H1 (cell line): ENCODE measurements at regions of chr1 and their contacts with region 1.

Region 1: DNA sequence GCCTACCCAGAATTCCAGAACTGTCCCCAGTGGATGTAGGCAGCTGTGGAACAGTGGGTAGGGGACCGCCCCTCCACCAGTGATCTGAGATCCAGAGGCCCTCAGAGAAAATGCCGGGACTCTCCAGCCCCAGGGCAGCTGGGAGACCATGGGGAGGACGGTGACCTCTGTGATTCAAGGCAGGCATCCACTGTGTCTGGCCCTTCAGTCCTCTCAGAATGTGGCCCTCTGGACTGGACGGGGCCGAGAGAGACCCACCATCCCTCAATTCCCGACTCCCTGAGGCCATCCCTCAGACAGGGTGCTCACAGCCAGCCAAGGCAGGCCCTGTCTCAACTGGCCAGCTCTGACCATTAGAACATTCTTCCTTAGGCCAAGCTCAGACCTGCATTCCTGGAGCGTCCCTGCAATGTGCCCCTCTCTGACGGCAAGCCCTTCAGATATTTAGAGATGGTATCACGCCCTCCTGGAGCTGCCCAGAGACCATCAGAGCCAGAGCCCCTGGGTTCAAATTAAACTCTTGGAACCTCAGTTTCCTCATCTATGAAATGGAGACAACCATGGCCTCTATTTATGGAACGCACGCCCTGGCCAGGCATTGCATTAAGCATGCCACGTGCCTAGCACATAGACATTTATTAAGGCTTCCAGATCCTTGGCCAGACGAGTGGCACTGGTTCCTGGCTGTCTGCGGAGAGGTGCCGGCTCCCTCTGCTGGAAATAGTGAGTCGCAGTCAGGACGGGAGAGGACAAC is 9.6 kb upstream of the EPS8L3 start:
- DNase-seq: peak; percentile 34 to 66
- H3K4me3 ChIP-seq: no peak overlapping the region
- H3K27ac ChIP-seq: no peak overlapping the region
- H3K4me1 ChIP-seq: peaks cover 0 to 4% (median 0%) of the 10 kb centered on the region in 4 experiments; a peak in 1 of 7 replicates
- H3K27me3 ChIP-seq: no peaks in the 10 kb centered on the region; a peak in 2 of 7 replicates
- CTCF ChIP-seq: peak; percentile 93 to 97 (median 95)
- EP300 ChIP-seq: no peak
- POLR2A ChIP-seq: no peak
- RAD21 ChIP-seq: peak; percentile 97

Region 2: DNA sequence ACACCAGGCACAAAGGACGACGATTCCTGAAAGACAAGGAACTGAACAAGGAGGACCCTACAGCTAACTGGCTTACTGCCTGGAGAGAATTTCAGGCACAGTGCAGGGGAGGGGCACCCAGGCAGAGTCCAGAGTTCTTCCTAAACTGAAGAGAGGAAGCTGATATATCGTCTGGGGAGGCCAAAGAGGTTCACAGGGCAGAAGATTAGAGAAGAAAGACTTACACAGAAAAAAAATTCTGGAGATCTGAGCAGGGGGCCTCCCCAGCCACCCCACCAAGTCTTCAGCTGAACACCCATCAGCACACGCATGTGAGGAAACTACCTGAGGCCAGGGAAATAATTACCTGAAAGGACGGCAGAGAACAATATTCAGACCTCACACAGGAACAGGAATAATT is 400.2 kb before region 1 on chr1:
- CTCF ChIA-PET with region 1: no interaction called
- POLR2A ChIA-PET with region 1: no interaction called
- DNase-seq: no peak
- H3K4me3 ChIP-seq: no peak overlapping the region
- H3K27ac ChIP-seq: no peak overlapping the region
- H3K4me1 ChIP-seq: peaks cover 0 to 10% (median 2%) of the 10 kb centered on the region in 4 experiments; a peak in 3 of 7 replicates
- H3K27me3 ChIP-seq: no peaks in the 10 kb centered on the region
- CTCF ChIP-seq: no peak
- EP300 ChIP-seq: no peak
- POLR2A ChIP-seq: no peak
- RAD21 ChIP-seq: no peak

Region 3: GRCh38 chr1:109589177-109589576 is 184.1 kb before region 1 on chr1:
- CTCF ChIA-PET with region 1: no interaction called
- POLR2A ChIA-PET with region 1: no interaction called
- DNase-seq: no peak
- H3K4me3 ChIP-seq: no peak overlapping the region
- H3K27ac ChIP-seq: no peak overlapping the region
- H3K4me1 ChIP-seq: no peaks in the 10 kb centered on the region
- H3K27me3 ChIP-seq: no peaks in the 10 kb centered on the region
- CTCF ChIP-seq: no peak
- EP300 ChIP-seq: no peak
- POLR2A ChIP-seq: no peak
- RAD21 ChIP-seq: no peak

Region 4: DNA sequence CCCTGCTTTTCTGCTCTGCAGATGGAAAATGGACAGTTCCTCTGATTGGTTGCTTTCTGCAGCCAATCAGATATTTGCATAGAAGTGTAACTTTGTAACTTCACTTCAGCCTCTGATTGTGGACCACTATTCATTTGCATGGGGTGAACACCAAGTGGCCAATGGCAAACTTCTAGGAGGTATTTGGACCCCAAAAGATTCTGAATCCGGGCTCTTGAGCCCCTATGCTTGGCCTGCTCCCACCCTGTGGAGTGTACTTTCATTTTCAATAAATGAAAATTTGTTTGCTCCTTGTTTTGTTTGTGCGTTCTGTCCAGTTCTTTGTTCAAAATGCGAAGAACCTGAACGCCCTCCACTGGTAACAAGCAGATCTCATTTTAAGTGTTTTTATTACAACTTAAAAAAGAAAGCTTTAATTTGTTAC is 123.8 kb before region 1 on chr1:
- CTCF ChIA-PET with region 1: interaction called, 293 read pairs
- POLR2A ChIA-PET with region 1: no interaction called
- DNase-seq: no peak
- H3K4me3 ChIP-seq: no peak overlapping the region
- H3K27ac ChIP-seq: no peak overlapping the region
- H3K4me1 ChIP-seq: no peaks in the 10 kb centered on the region
- H3K27me3 ChIP-seq: peaks cover 0 to 2% (median 2%) of the 10 kb centered on the region in 4 experiments; a peak in 6 of 7 replicates
- CTCF ChIP-seq: no peak
- EP300 ChIP-seq: no peak
- POLR2A ChIP-seq: no peak
- RAD21 ChIP-seq: no peak

Region 5: GRCh38 chr1:109751531-109752260 is 21.6 kb before region 1 on chr1:
- CTCF ChIA-PET with region 1: interaction called, 14 read pairs
- POLR2A ChIA-PET with region 1: no interaction called
- DNase-seq: no peak
- H3K4me3 ChIP-seq: no peak overlapping the region
- H3K27ac ChIP-seq: no peak overlapping the region
- H3K4me1 ChIP-seq: no peaks in the 10 kb centered on the region
- H3K27me3 ChIP-seq: no peaks in the 10 kb centered on the region
- CTCF ChIP-seq: no peak
- EP300 ChIP-seq: no peak
- POLR2A ChIP-seq: no peak
- RAD21 ChIP-seq: no peak

Region 6: GRCh38 chr1:109802901-109803561 is 29.7 kb after region 1 on chr1:
- CTCF ChIA-PET with region 1: interaction called, 10 read pairs
- POLR2A ChIA-PET with region 1: no interaction called
- DNase-seq: no peak
- H3K4me3 ChIP-seq: no peak overlapping the region
- H3K27ac ChIP-seq: no peak overlapping the region
- H3K4me1 ChIP-seq: no peaks in the 10 kb centered on the region
- H3K27me3 ChIP-seq: no peaks in the 10 kb centered on the region
- CTCF ChIP-seq: no peak
- EP300 ChIP-seq: no peak
- POLR2A ChIP-seq: no peak
- RAD21 ChIP-seq: no peak

Region 7: DNA sequence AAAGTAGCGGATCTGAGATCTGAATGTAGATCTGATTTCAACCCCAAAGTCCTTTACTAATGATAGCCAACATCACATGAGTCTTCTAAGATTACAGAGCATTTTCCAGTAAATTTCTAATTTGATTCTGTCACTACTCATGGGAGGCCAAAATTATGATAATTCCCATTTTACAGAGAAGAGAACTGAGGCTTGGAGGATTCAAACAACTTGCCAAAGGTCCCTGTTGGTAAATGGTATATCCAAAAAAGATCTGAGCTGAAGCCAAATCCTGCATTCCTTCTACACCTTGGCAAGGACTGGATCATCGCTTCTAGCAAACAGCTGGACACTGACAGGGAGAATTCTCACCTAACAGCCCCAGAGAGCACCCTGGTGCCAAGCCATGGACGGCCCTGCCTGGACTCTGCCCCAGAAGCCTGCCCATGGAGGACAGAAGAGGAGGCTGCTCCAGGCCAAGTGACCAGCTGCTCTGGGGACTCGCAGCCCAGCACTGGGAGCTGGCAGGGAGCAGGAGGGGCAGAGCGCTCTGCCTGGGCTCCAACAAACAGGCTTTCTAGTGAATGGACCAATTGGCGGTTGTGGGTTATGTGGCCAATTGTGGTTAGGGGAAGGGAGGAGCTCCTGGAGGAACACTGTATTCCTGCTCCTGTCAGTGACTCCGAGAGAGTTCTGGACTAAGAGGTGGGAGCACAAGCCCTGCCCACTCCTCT is 130.9 kb after region 1 on chr1:
- CTCF ChIA-PET with region 1: interaction called, 13 read pairs
- POLR2A ChIA-PET with region 1: no interaction called
- DNase-seq: no peak
- H3K4me3 ChIP-seq: no peak overlapping the region
- H3K27ac ChIP-seq: no peak overlapping the region
- H3K4me1 ChIP-seq: peaks cover 0 to 3% (median 1%) of the 10 kb centered on the region in 4 experiments; a peak in 2 of 7 replicates
- H3K27me3 ChIP-seq: peaks cover 0 to 18% (median 12%) of the 10 kb centered on the region in 4 experiments; a peak in 6 of 7 replicates
- CTCF ChIP-seq: no peak
- EP300 ChIP-seq: no peak
- POLR2A ChIP-seq: no peak
- RAD21 ChIP-seq: no peak

Region 8: GRCh38 chr1:109959974-109960744 is 186.8 kb after region 1 on chr1:
- CTCF ChIA-PET with region 1: interaction called, 10 read pairs
- POLR2A ChIA-PET with region 1: no interaction called
- DNase-seq: no peak
- H3K4me3 ChIP-seq: peak overlapping the region in 2 of 4 experiments; percentile 13 to 45; a peak in 4 of 8 replicates
- H3K27ac ChIP-seq: no peak overlapping the region; the same call in 1 of the 2 replicates
- H3K4me1 ChIP-seq: peaks cover 5 to 26% (median 17%) of the 10 kb centered on the region in 4 experiments; a peak in 6 of 7 replicates
- H3K27me3 ChIP-seq: peaks cover 0 to 9% (median 2%) of the 10 kb centered on the region in 4 experiments; a peak in 4 of 7 replicates
- CTCF ChIP-seq: no peak
- EP300 ChIP-seq: 0 out of 3 replicates have a peak, but pooled peaks of 1 of the 2 experiments have one; percentile 33
- POLR2A ChIP-seq: no peak
- RAD21 ChIP-seq: no peak

Region 9: GRCh38 chr1:110011527-110012041 is 238.3 kb after region 1 on chr1:
- CTCF ChIA-PET with region 1: interaction called, 32 read pairs
- POLR2A ChIA-PET with region 1: no interaction called
- DNase-seq: peak in 1 of 2 experiments; percentile 49
- H3K4me3 ChIP-seq: no peak overlapping the region
- H3K27ac ChIP-seq: no peak overlapping the region
- H3K4me1 ChIP-seq: peaks cover 0 to 9% (median 5%) of the 10 kb centered on the region in 4 experiments; a peak in 3 of 7 replicates
- H3K27me3 ChIP-seq: no peaks in the 10 kb centered on the region
- CTCF ChIP-seq: peak; percentile 5 to 68 (median 47)
- EP300 ChIP-seq: no peak
- POLR2A ChIP-seq: no peak
- RAD21 ChIP-seq: peak; percentile 67 to 74